ENCODE measurements at regions of chr2 and their contacts with region 1.

Region 1: GRCh38 chr2:142415461-142415860 is 284.6 kb upstream of the LRP1B start:
- DNase-seq: no peak

Region 2: DNA sequence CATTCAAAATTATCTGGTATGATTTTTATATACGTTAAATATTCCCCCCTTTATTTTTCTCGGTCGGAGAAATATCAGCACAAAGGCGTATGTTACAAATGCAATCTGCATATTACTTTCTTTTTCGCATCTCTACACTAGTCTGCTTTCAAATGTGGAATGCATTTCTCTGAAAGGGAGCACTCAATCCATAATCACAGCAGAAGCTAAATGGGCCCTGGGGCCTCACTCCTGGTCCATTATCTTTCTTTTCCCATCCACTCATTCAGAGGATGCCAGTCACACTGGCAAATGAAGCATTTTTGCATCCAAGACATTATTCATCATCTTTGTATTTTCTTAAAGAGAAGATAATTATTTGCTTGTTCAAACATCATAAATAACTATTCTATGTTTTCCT is 10.6 kb after region 1 on chr2:
- intact Hi-C with region 1: loop called (anchors 1 kb)
- DNase-seq: no peak